ENCODE measurements at regions of chr11 and their contacts with region 1.

Region 1: DNA sequence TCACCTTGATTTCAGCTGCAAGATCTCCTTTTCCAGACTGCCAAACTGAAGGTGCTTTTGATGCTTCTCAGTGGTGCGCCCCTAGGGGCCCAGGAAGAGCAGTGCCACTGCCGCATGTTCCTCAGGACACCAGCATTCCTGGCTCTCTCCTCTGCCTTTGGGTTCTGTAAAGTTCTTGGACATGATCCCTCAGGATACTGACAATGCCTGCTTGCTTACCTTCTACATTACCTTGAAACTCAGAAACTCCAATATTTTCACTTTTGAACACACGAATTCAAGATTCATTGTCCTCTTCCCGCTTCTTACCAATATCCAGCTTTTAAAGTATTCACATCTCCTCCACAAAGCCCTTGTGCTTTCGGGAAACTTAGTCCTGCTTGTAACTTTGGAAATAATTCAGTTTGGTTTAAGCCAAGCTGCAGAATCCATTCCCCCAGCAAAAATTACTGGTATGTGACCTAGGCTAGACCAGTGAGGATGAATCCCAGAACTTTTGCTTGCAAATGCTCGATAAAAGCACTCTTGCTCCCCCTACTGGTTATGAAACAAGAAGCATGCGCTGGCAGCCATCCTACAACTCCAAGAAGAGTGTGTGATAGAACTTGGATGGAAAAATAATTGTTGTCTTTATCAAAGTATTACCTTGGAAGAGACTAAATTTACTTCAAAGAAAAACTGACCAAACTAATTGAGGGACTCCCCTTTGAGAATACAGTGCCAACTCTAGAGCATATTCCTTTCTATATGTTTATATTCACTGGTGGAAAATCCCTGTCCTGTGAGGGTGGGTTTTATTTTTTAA is 16.5 kb upstream of the OR5B21 start:
- DNase-seq: peak; percentile 67
- H3K4me3 Mint-ChIP-seq: peak overlapping the region; percentile 61
- H3K27ac Mint-ChIP-seq: peak overlapping the region; percentile 86
- H3K4me1 Mint-ChIP-seq: peaks cover 52% of the 10 kb centered on the region
- H3K27me3 Mint-ChIP-seq: no peaks in the 10 kb centered on the region

Region 2: GRCh38 chr11:57657194-57658022 is 867.0 kb before region 1 on chr11 and contains the start of gene CLP1:
- CTCF ChIA-PET with region 1: interaction called, 3 read pairs
- intact Hi-C with region 1: loop called (anchors 2 kb)
- DNase-seq: peak; percentile 100
- H3K4me3 Mint-ChIP-seq: peak within 1 kb of the TSS; percentile 92
- H3K27ac Mint-ChIP-seq: peak within 1 kb of the TSS; percentile 90
- H3K4me1 Mint-ChIP-seq: peaks cover 34% of the 10 kb centered on the region
- H3K27me3 Mint-ChIP-seq: no peaks in the 10 kb centered on the region
- total RNA-seq, gene CLP1: 11.3 to 14.2 TPM

Region 3: DNA sequence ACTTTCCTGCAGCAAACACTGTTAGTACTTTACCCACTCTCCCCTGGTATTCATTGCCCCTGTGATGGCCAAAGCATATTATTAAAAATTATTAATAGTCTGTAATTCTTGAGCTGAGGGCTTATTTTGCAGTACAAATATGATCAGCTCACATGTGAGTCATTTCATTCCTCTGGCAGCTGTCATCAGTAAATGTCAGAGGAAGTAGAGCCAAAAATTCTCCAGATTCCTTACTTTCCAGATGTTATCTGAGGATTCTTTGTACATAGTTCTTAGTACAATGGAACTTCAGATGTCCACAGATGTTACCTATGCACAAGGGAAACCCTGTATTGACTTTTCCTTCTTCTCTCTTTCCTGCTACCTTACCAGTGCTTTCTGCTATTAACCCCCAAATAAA is 130.2 kb before region 1 on chr11:
- CTCF ChIA-PET with region 1: interaction called, 3 read pairs
- intact Hi-C with region 1: loop called (anchors 10 kb)
- DNase-seq: no peak
- H3K4me3 Mint-ChIP-seq: no peak overlapping the region
- H3K27ac Mint-ChIP-seq: no peak overlapping the region
- H3K4me1 Mint-ChIP-seq: peaks cover 9% of the 10 kb centered on the region
- H3K27me3 Mint-ChIP-seq: peaks cover 2% of the 10 kb centered on the region

Region 4: DNA sequence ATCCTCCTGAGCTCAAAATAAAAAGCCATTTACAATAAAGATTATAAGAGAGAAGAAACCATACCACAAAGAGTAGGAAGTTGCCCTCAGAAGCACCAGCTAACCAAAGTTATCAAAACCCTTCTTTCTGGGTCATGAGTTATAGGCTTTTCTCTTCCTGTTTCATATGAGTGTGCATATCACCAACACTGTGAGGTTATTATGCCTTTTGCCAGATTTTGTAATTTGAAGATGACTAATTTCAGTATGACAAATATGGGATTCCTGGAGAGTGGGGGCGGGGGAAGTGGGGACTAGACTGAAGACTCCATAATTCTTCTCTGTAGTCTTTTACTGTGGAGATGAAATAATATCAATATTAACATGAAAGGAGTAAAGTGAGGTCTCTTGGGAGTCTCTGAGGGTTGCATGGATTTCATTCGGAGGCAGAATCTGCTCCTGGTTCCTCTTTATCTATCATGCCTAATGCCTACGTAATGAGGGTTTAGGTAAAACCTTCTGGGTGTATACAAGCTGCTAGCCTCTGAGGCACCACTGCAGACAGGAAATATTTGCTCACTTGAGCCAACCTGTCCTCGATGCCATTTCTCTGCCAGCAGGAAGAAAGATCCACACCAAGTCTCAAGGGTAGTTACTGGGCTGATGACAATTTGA is 49.1 kb after region 1 on chr11:
- CTCF ChIA-PET with region 1: interaction called, 31 read pairs
- intact Hi-C with region 1: loop called (anchors 1 kb)
- DNase-seq: peak; percentile 87
- H3K4me3 Mint-ChIP-seq: peak overlapping the region; percentile 100
- H3K27ac Mint-ChIP-seq: peak overlapping the region; percentile 99
- H3K4me1 Mint-ChIP-seq: peaks cover 54% of the 10 kb centered on the region
- H3K27me3 Mint-ChIP-seq: no peaks in the 10 kb centered on the region

Region 5: DNA sequence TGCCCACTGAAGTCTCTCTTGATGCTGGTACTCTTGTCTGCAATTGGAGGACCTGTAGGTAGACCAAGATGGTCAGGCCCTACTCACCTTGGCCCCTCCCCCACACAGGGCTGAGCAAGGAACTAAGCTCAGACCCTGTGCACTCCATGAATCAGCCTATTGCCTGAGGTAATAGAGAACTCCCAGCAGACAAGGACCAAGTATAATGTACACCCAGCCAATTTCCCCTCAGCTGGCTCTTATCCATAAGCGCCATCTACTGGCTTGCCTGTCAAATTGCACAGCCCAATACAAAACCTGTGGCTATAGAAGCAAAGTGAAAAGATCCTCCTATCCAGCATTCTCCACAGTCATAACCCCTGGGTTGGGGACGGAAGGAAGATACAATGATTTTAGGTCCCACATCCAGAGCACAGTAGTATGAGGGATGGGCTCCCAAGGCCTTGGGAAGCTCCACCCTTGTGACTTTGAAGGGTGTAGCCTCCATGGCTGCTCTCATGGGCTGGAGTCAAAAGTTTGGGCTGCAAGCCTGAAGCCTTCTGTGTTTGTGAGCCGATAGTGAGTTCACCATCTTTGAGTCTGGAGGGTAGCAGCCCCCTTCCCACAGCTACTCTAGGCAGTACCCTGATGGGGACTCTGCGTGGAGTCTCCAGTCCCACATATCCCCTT is 264.1 kb after region 1 on chr11:
- CTCF ChIA-PET with region 1: no interaction called
- intact Hi-C with region 1: loop called (anchors 5 kb)
- DNase-seq: peak; percentile 66
- H3K4me3 Mint-ChIP-seq: no peak overlapping the region
- H3K27ac Mint-ChIP-seq: no peak overlapping the region
- H3K4me1 Mint-ChIP-seq: no peaks in the 10 kb centered on the region
- H3K27me3 Mint-ChIP-seq: peaks cover 5% of the 10 kb centered on the region

Region 6: DNA sequence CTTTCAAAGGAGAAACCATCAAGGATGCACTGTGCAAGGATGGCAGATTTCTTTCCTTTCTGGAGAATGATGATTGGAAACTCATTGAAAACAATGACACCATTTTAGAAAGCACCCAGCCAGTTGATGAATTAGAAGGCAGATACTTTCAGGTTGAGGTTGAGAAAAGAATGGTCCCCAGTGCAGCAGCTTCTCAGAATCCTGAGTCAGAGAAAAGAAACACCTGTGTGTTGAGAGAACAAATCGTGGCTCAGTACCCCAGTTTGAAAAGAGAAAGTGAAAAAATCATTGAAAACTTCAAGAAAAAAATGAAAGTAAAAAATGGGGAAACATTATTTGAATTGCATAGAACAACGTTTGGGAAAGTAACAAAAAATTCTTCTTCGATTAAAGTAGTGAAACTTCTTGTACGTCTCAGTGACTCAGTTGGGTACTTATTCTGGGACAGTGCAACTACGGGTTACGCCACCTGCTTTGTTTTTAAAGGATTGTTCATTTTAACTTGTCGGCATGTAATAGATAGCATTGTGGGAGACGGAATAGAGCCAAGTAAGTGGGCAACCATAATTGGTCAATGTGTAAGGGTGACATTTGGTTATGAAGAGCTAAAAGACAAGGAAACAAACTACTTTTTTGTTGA is 628.0 kb after region 1 on chr11:
- CTCF ChIA-PET with region 1: no interaction called
- intact Hi-C with region 1: loop called (anchors 1 kb)
- DNase-seq: peak; percentile 71
- H3K4me3 Mint-ChIP-seq: peak overlapping the region; percentile 53
- H3K27ac Mint-ChIP-seq: peak overlapping the region; percentile 91
- H3K4me1 Mint-ChIP-seq: peaks cover 38% of the 10 kb centered on the region
- H3K27me3 Mint-ChIP-seq: no peaks in the 10 kb centered on the region